Posterior vena cava (tissue), 2 donors: ENCODE measurements at regions of chr11 and their contacts with region 1.

Region 1: GRCh38 chr11:121591405-121592033 is 138.8 kb upstream of the SORL1-AS1 start:
- DNase-seq: no peak

Region 2: DNA sequence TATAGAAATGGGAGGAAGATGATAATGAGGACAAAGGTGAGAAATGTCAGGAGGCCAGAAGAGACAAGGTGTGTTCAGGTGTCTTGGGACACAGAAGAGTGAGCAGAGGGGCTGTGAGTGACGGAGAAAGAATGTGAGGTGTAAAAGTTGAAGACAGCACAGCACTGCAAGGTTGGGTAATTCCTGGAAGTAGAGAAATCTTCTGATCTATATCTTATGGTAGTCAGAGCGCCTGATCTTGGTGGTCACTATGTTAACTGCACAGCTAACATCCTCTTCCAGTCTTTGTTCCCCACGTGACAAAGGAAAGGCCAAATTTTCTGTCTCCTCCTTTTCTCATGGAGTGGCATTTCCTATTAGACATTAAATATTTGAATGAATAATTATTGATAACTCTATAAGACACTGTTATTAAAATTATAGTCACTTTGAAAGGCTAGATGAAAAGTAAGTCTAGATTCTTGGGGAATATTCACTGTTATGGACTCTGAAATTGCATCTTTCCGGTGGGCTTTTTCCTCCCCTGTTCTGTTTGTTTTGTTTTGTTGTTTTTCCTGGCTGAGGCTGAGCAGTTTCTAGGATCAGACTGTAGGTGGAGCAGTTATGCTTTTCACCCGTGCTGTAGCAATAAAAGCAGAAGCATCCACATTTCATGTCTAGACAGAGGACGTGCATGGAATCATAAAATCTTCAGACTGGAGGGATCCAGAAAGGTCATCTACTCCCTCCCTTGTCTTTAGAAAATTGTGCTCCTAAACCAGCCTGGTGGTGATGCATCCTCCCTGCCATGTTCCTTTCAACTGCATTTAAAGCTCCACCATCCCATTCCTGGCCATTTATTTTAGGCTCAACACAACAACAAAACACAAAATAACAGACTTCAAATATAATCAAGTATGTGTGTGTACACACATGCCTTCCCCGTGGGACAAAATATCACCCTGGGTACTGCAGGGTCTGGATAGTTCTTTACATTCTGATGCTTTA is 272.4 kb before region 1 on chr11:
- intact Hi-C with region 1: loop called in 1 of 2 experiments (anchors 2 kb)
- DNase-seq: no peak